ENCODE measurements at regions of chr1 and their contacts with region 1.

Region 1: GRCh38 chr1:119647734-119648619 is at the start of gene ZNF697:
- DNase-seq: peak; percentile 97 to 98
- H3K4me3 ChIP-seq: peak within 1 kb of the TSS; percentile 99
- H3K27ac ChIP-seq: peak within 1 kb of the TSS; percentile 43
- H3K4me1 ChIP-seq: peaks cover 26% of the 10 kb centered on the region
- H3K27me3 ChIP-seq: no peaks in the 10 kb centered on the region
- CTCF ChIP-seq: peak; percentile 45; the same call in 1 of the 2 replicates
- total RNA-seq, gene ZNF697: 3.6 and 4.1 TPM in 2 replicates

Region 2: DNA sequence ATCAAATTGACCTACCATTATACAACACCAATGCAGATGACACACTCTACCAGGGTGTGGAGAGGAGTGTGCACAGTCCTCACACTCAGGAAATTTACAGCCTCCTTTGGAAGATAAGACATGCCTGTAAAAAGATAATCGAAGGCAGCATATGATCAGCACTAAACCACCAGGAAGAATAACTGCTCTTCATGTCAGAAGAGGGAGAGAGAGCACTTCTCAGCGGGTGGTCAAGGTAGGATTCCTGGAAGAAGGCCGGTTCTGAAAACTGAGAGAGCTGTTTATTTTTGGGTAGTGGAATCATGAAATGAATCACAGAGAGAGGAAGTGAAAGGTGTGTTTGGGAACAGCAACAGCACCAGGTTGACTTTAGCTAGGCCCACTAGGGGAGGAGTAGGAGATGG is 14.1 kb after region 1 on chr1:
- CTCF ChIA-PET with region 1: interaction called, 5 read pairs
- POLR2A ChIA-PET with region 1: interaction called, 12 read pairs
- intact Hi-C with region 1: no loop called
- DNase-seq: no peak
- H3K4me3 ChIP-seq: no peak overlapping the region
- H3K27ac ChIP-seq: no peak overlapping the region
- H3K4me1 ChIP-seq: peaks cover 19% of the 10 kb centered on the region
- H3K27me3 ChIP-seq: no peaks in the 10 kb centered on the region
- CTCF ChIP-seq: no peak

Region 3: DNA sequence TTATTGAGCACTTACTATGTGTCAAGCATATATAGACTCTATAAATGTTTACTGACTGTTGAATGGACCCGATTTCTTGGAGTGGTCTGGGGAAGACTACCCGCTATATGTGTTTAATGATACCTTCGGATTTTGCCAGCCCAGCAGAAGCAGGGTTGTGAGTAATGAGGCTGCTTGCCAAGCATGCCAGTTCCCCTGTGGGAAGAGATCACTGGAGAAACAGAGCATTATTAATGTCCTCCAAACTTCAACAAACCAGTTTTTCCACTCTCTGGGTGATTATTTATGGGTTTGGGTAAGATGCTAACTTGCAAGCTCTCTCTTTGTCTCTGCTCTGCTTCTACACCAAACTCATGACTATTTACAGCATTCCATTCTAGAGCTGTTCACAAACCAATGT is 38.7 kb after region 1 on chr1:
- CTCF ChIA-PET with region 1: no interaction called
- POLR2A ChIA-PET with region 1: interaction called, 4 read pairs
- intact Hi-C with region 1: loop called (anchors 5 kb)
- DNase-seq: peak; percentile 70 to 99
- H3K4me3 ChIP-seq: peak overlapping the region; percentile 17; the same call in 1 of the 2 replicates
- H3K27ac ChIP-seq: peak overlapping the region; percentile 82
- H3K4me1 ChIP-seq: peaks cover 47% of the 10 kb centered on the region
- H3K27me3 ChIP-seq: no peaks in the 10 kb centered on the region
- CTCF ChIP-seq: no peak

Measured in PC-9 (cell line).